Psoas muscle (tissue), 8 donors: ENCODE measurements at regions of chr6 and their contacts with region 1.

Region 1: GRCh38 chr6:144482142-144482541 is 197.0 kb downstream of the UTRN start:
- DNase-seq: peak; percentile 74 to 83
- ATAC-seq: peak; percentile 27 to 57 (median 54)
- H3K4me3 ChIP-seq: no peak overlapping the region
- H3K27ac ChIP-seq: no peak overlapping the region
- H3K4me1 ChIP-seq: peaks cover 32% of the 10 kb centered on the region
- H3K27me3 ChIP-seq: no peaks in the 10 kb centered on the region
- CTCF ChIP-seq: peak; percentile 60

Region 2: DNA sequence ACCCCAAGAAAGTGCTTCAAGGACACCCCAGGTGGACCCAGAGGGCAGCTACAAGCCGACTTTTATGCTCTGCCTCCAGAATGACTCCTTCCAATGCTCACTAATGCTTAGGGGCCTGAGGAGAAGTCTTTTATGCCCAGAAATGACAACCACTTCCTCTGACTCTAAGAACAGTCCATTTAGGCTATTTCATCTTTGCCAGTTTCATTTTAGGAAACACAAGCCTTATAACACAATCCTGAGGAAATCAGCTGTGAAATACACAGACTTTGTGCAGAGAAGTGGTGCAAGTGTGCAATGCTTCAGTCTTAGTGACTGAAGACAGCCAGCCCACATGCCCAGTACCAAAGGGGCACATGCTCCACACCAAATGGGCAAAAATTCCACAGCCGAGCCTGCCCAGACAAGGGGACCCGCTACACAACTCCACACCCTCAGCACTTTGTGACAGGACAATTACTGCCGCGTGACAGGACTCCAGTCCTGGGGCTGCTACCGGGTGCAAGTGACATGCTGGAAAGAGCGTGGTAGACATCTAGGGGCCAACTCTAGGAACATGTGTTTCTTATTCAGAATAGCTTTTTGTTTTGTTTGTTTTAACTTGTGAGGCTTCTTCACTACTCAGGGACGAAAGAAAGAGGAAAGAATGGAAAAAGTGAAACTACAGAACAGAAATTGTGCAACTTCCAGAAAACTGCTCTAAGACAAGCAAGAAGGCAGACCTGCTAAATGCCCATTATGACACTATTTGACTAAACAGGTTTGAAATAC is 445.9 kb before region 1 on chr6:
- intact Hi-C with region 1: no loop called
- DNase-seq: peak in 1 of 2 donors; percentile 18
- ATAC-seq: peak in 1 of 4 donors; percentile 37
- H3K4me3 ChIP-seq: peak overlapping the region; percentile 43
- H3K27ac ChIP-seq: no peak overlapping the region
- H3K4me1 ChIP-seq: peaks cover 6% of the 10 kb centered on the region
- H3K27me3 ChIP-seq: peaks cover 0 to 3% (median 0%) of the 10 kb centered on the region in 3 donors
- CTCF ChIP-seq: no peak

Region 3: GRCh38 chr6:144104898-144105487 is 377.1 kb before region 1 on chr6:
- intact Hi-C with region 1: loop called (anchors 5 to 10 kb)
- DNase-seq: no peak
- ATAC-seq: peak; percentile 61 to 86 (median 68)
- H3K4me3 ChIP-seq: no peak overlapping the region
- H3K27ac ChIP-seq: no peak overlapping the region
- H3K4me1 ChIP-seq: no peaks in the 10 kb centered on the region
- H3K27me3 ChIP-seq: no peaks in the 10 kb centered on the region
- CTCF ChIP-seq: peak; percentile 64

Region 4: GRCh38 chr6:144400321-144400720 is 81.8 kb before region 1 on chr6:
- intact Hi-C with region 1: loop called in 1 of 2 experiments (anchors 2 kb)
- DNase-seq: no peak
- ATAC-seq: no peak
- H3K4me3 ChIP-seq: no peak overlapping the region
- H3K27ac ChIP-seq: no peak overlapping the region
- H3K4me1 ChIP-seq: peaks cover 13% of the 10 kb centered on the region
- H3K27me3 ChIP-seq: no peaks in the 10 kb centered on the region
- CTCF ChIP-seq: no peak